ENCODE measurements at regions of chr19 and their contacts with region 1.

Region 1: GRCh38 chr19:3692141-3693024 is 7.9 kb downstream of the PIP5K1C start:
- DNase-seq: peak; percentile 61
- ATAC-seq: peak; percentile 51
- H3K4me3 Mint-ChIP-seq: no peak overlapping the region
- H3K27ac Mint-ChIP-seq: no peak overlapping the region
- H3K4me1 Mint-ChIP-seq: peaks cover 45% of the 10 kb centered on the region
- H3K27me3 Mint-ChIP-seq: no peaks in the 10 kb centered on the region
- CTCF ChIP-seq: peak; percentile 67

Region 2: GRCh38 chr19:3665681-3666544 is 26.5 kb before region 1 on chr19:
- CTCF ChIA-PET with region 1: interaction called, 32 read pairs
- POLR2A ChIA-PET with region 1: interaction called, 25 read pairs
- intact Hi-C with region 1: no loop called
- DNase-seq: peak; percentile 80
- ATAC-seq: peak; percentile 87
- H3K4me3 Mint-ChIP-seq: no peak overlapping the region
- H3K27ac Mint-ChIP-seq: no peak overlapping the region
- H3K4me1 Mint-ChIP-seq: peaks cover 25% of the 10 kb centered on the region
- H3K27me3 Mint-ChIP-seq: no peaks in the 10 kb centered on the region
- CTCF ChIP-seq: peak; percentile 87

Region 3: DNA sequence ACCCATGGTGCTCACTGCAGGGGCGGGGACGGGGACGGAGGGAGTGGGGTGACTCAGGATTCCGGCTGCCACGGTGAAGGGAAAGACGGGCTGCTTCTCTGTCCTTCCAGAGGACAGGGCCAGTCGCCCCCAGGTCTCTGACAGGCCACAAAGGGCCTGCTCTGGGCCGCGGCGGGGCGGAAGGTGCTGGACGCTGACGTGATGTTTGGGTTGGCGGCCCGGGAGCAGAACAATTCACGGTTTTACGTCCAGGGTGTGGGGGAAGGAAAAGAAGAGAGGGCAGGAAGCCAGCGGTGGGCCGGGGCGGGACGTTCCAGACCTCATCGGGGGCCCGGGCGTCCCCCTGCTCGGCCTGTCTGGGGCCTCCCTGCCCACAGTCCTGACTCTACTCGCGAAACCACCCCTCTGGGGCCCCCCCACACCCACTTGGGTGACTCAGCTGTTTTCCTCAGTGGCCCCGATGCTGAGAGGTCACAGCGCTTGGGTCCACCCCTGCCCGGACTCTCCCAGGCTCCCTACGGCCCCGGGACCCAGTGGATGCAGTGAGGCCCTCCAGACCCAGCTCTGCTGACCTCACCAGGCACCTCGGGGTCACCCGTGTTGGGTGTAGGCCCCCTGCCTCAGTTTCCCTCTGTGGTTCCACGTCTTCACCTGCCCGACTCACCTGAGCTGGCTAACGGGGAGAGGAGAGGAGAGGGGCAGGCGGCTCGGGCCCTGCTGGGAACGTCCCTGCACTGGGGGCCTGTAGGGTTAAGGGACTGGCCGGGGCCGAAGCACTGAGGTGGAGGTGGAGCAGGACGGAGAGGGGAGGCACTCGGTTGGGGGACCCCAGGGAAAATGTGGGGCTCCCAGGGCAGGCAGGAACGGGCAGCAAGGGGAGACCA is 21.3 kb before region 1 on chr19:
- CTCF ChIA-PET with region 1: interaction called, 32 read pairs
- POLR2A ChIA-PET with region 1: interaction called, 25 read pairs
- intact Hi-C with region 1: no loop called
- DNase-seq: peak; percentile 91
- ATAC-seq: peak; percentile 67
- H3K4me3 Mint-ChIP-seq: peak overlapping the region; percentile 62
- H3K27ac Mint-ChIP-seq: peak overlapping the region; percentile 90
- H3K4me1 Mint-ChIP-seq: peaks cover 43% of the 10 kb centered on the region
- H3K27me3 Mint-ChIP-seq: no peaks in the 10 kb centered on the region
- CTCF ChIP-seq: peak; percentile 7

Region 4: GRCh38 chr19:3710265-3710812 is 18.0 kb after region 1 on chr19:
- CTCF ChIA-PET with region 1: interaction called, 11 read pairs
- POLR2A ChIA-PET with region 1: interaction called, 3 read pairs
- intact Hi-C with region 1: no loop called
- DNase-seq: no peak
- ATAC-seq: no peak
- H3K4me3 Mint-ChIP-seq: no peak overlapping the region
- H3K27ac Mint-ChIP-seq: no peak overlapping the region
- H3K4me1 Mint-ChIP-seq: peaks cover 4% of the 10 kb centered on the region
- H3K27me3 Mint-ChIP-seq: peaks cover 5% of the 10 kb centered on the region
- CTCF ChIP-seq: no peak

Measured in activated CD8-positive, alpha-beta T cell treated with anti-CD3 and anti-CD28 coated beads for 36 hours (primary cell).